ENCODE measurements at regions of chr17 and their contacts with region 1.

Region 1: DNA sequence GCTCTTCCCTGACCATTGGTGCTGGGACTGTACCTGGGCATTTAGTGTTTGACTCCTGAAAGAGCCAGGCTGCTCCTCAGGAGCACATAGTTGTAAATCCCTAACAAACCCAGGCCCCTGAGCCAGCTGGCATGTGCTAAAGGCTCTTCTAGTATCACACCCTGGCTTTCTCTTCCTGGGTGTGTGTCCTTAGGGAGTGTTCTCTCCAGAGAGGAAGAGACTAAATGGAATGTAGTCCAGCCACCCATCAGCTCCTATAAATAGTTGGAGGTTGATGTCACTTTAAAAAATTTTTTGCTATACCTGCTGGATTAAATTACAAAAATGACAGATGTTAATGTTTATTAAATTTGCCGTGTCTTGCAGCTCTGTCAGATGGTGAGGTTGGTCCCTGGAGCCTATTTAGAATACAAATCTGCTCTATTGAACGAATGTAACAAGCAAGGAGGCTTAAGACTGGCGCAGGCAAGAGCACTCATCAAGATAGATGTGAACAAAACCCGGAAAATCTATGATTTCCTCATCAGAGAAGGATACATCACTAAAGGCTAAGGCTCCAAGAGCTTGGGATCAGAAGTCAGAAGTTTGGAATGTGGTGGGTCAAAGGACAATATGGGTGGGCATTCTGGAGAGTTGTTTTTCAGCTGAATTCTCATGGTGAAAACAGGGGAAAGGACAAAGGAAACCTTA is 13.1 kb upstream of the DUSP14 start:
- DNase-seq: peak; percentile 86
- H3K4me3 ChIP-seq: peak overlapping the region in 1 of 3 experiments; percentile 26
- H3K27ac ChIP-seq: peak overlapping the region; percentile 96
- H3K4me1 ChIP-seq: peaks cover 22% of the 10 kb centered on the region
- H3K27me3 ChIP-seq: no peaks in the 10 kb centered on the region
- CTCF ChIP-seq: no peak
- POLR2A ChIP-seq: no peak

Region 2: DNA sequence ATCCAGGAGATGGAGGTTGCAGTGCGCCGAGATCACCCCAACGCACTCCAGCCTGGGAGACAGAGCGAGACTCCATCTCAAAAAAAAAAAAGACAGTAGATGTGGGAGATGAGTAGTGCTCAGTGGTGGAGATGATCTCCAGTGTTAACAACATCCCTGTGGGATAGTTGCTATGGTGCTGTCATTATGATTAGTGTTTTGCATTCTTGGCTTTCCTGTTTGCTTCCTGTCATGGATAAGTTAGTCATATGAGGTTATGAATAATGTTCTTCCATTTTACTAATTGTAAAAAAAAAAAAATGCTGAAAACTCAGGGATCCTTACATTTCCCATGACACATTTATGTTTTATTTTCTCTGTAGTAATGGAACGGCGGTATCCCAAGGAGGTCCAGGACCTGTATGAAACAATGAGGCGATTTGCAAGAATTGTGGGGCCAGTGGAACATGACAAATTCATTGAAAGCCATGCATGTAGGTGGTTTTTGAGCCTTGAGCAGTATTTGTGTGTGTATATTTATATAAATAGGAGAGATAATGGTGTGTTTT is 11.4 kb before region 1 on chr17:
- CTCF ChIA-PET with region 1: interaction called, 4 read pairs
- POLR2A ChIA-PET with region 1: no interaction called
- dilution Hi-C with region 1: no loop called
- intact Hi-C with region 1: loop called (anchors 1 kb)
- DNase-seq: peak; percentile 88
- H3K4me3 ChIP-seq: no peak overlapping the region
- H3K27ac ChIP-seq: peak overlapping the region; percentile 94
- H3K4me1 ChIP-seq: peaks cover 16% of the 10 kb centered on the region
- H3K27me3 ChIP-seq: no peaks in the 10 kb centered on the region
- CTCF ChIP-seq: no peak
- POLR2A ChIP-seq: no peak

Measured in endothelial cell of umbilical vein (primary cell).